Activated CD8-positive, alpha-beta T cell treated with anti-CD3 and anti-CD28 coated beads, Interleukin-2, amount 10 ng/mL, durations not matched to agents 7 days and 5 days (primary cell): ENCODE measurements at regions of chr18 and their contacts with region 1.

Region 1: GRCh38 chr18:63578357-63578958 is 8.7 kb upstream of the SERPINB13 start:
- DNase-seq: peak; percentile 35
- ATAC-seq: peak; percentile 47
- H3K4me3 Mint-ChIP-seq: no peak overlapping the region
- H3K27ac Mint-ChIP-seq: no peak overlapping the region
- H3K4me1 Mint-ChIP-seq: no peaks in the 10 kb centered on the region
- H3K27me3 Mint-ChIP-seq: peaks cover 11% of the 10 kb centered on the region

Region 2: GRCh38 chr18:63511286-63511685 is 67.2 kb before region 1 on chr18:
- CTCF ChIA-PET with region 1: interaction called, 108 read pairs
- POLR2A ChIA-PET with region 1: no interaction called
- DNase-seq: peak; percentile 29
- ATAC-seq: no peak
- H3K4me3 Mint-ChIP-seq: no peak overlapping the region
- H3K27ac Mint-ChIP-seq: no peak overlapping the region
- H3K4me1 Mint-ChIP-seq: no peaks in the 10 kb centered on the region
- H3K27me3 Mint-ChIP-seq: peaks cover 31% of the 10 kb centered on the region

Region 3: GRCh38 chr18:63564561-63564960 is 13.9 kb before region 1 on chr18:
- CTCF ChIA-PET with region 1: interaction called, 31 read pairs
- POLR2A ChIA-PET with region 1: no interaction called
- DNase-seq: no peak
- ATAC-seq: no peak
- H3K4me3 Mint-ChIP-seq: no peak overlapping the region
- H3K27ac Mint-ChIP-seq: no peak overlapping the region
- H3K4me1 Mint-ChIP-seq: no peaks in the 10 kb centered on the region
- H3K27me3 Mint-ChIP-seq: peaks cover 5% of the 10 kb centered on the region